ENCODE measurements at regions of chr17 and their contacts with region 1.

Region 1: DNA sequence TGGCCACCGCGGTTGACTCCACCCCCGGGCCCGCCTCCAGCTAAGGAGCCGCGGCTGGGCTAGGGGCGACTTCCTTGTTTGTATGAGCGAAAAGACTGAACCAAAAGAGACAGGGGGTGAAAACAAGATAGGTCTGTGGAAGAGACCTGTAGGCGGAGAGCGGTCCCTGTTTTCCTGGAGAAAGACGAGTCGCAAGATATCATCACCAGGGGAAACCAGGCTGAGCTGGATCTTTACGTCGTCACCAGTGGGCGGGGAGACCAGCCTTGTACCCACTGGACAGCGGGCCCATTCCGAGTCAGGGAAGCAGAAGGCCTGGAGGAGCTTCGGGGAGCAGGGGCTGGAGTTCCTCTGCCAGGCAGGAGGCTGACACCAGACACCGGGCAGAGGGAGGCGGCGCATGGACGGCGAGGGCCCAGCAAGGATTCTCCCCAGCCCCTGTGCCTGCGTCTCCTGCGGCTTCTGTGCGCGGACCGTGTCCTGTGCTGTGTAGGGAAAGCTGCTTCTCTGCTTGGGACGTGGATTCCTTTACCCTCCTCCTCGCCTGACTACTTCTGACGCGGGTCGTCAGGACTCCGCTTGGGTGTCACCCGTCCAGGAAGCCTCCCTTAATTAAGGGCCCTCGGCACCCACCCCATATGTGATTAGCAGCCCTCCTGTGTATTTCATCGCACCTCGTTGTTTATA is 10.3 kb upstream of the ARL4D start:
- DNase-seq: peak; percentile 88 to 95 (median 92)
- ATAC-seq: peak; percentile 70 to 72
- H3K4me3 Mint-ChIP-seq: peak overlapping the region; percentile 93 to 97 (median 95)
- H3K27ac Mint-ChIP-seq: peak overlapping the region; percentile 95 to 100 (median 99)
- H3K4me1 Mint-ChIP-seq: peaks cover 15 to 38% (median 37%) of the 10 kb centered on the region in 4 donors
- H3K27me3 Mint-ChIP-seq: no peaks in the 10 kb centered on the region

Region 2: GRCh38 chr17:43377056-43377810 is 11.3 kb before region 1 on chr17:
- POLR2A ChIA-PET with region 1: interaction called, 755 read pairs
- DNase-seq: no peak
- ATAC-seq: no peak
- H3K4me3 Mint-ChIP-seq: no peak overlapping the region
- H3K27ac Mint-ChIP-seq: peak overlapping the region in 1 of 10 donors; percentile 76
- H3K4me1 Mint-ChIP-seq: peaks cover 2 to 8% (median 3%) of the 10 kb centered on the region in 4 donors
- H3K27me3 Mint-ChIP-seq: no peaks in the 10 kb centered on the region

Region 3: GRCh38 chr17:43483674-43484372 is 95.3 kb after region 1 on chr17 and contains the start of gene DHX8:
- POLR2A ChIA-PET with region 1: interaction called, 60 read pairs
- DNase-seq: peak; percentile 96 to 99 (median 98)
- ATAC-seq: peak; percentile 94 to 96
- H3K4me3 Mint-ChIP-seq: peak within 1 kb of the TSS; percentile 95 to 100 (median 100)
- H3K27ac Mint-ChIP-seq: peak within 1 kb of the TSS; percentile 97 to 100 (median 100)
- H3K4me1 Mint-ChIP-seq: peaks cover 10 to 48% (median 35%) of the 10 kb centered on the region in 4 donors
- H3K27me3 Mint-ChIP-seq: no peaks in the 10 kb centered on the region
- polyA plus RNA-seq, gene DHX8: 16.3 to 28.4 (median 28.2) TPM

Region 4: DNA sequence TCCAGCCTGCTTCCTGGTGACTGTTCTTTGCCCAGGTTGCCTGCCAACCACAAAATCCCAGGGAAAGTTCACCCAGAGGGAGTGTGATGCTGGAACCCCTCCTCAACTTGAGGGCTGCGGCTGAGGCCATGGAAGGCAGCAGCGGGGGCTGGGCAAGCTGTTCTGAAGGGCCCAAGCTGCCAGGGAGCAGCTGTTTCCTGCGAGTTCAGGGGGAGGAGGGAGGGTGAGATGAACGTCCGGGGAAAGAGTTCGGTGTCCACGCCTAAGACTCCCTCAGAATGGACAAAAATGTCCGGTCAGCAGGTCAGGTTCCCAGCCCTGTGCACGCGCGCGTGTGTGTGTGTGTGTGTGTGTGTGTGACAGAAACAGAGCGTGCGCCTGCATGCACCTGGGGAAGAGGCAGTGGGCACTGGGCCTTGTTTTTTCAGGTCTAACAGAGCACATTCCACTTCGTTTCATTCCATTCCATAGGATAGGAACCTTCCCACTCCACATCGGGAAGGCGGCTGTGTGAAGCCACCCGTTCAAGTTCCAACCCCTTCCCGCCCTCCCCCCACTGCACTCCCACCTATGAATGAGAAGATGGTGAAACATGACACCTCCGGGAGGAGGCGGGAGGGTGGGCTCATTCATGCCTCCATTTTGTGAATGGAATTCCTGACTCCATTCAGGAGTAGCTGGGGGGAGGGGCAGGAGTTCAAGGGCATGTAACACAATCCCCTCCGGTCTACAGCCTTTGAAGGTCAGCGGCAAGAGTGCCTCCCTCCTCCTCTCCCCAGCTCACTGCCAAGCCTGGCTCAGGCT is 142.0 kb after region 1 on chr17:
- POLR2A ChIA-PET with region 1: no interaction called
- DNase-seq: no peak
- ATAC-seq: no peak
- H3K4me3 Mint-ChIP-seq: no peak overlapping the region
- H3K27ac Mint-ChIP-seq: peak overlapping the region in 2 of 10 donors; percentile 29 to 43
- H3K4me1 Mint-ChIP-seq: peaks cover 0 to 10% (median 5%) of the 10 kb centered on the region in 4 donors
- H3K27me3 Mint-ChIP-seq: no peaks in the 10 kb centered on the region